ENCODE measurements at regions of chr16 and their contacts with region 1.

Region 1: GRCh38 chr16:8572919-8573724 is 17.2 kb downstream of the TMEM114 start:
- DNase-seq: no peak
- ATAC-seq: peak; percentile 56
- H3K4me3 ChIP-seq: no peak overlapping the region
- H3K27ac ChIP-seq: no peak overlapping the region
- H3K4me1 ChIP-seq: no peaks in the 10 kb centered on the region
- H3K27me3 ChIP-seq: no peaks in the 10 kb centered on the region; a peak in 2 of 4 replicates
- CTCF ChIP-seq: peak; percentile 39 to 64 (median 54); a peak in 5 of 6 replicates
- EP300 ChIP-seq: no peak
- POLR2A ChIP-seq: no peak
- RAD21 ChIP-seq: peak; percentile 86

Region 2: GRCh38 chr16:7979448-7980132 is 593.5 kb before region 1 on chr16:
- CTCF ChIA-PET with region 1: no interaction called
- POLR2A ChIA-PET with region 1: no interaction called
- RAD21 ChIA-PET with region 1: no interaction called
- SMC1A ChIA-PET with region 1: no interaction called
- in situ Hi-C with region 1: no loop called
- intact Hi-C with region 1: no loop called
- DNase-seq: no peak
- ATAC-seq: no peak
- H3K4me3 ChIP-seq: no peak overlapping the region
- H3K27ac ChIP-seq: no peak overlapping the region
- H3K4me1 ChIP-seq: no peaks in the 10 kb centered on the region
- H3K27me3 ChIP-seq: no peaks in the 10 kb centered on the region
- CTCF ChIP-seq: no peak
- EP300 ChIP-seq: no peak
- POLR2A ChIP-seq: no peak
- RAD21 ChIP-seq: no peak

Region 3: GRCh38 chr16:8330761-8331160 is 242.4 kb before region 1 on chr16:
- CTCF ChIA-PET with region 1: no interaction called
- POLR2A ChIA-PET with region 1: no interaction called
- RAD21 ChIA-PET with region 1: no interaction called
- SMC1A ChIA-PET with region 1: no interaction called
- in situ Hi-C with region 1: no loop called
- intact Hi-C with region 1: no loop called
- DNase-seq: no peak
- ATAC-seq: no peak
- H3K4me3 ChIP-seq: no peak overlapping the region
- H3K27ac ChIP-seq: no peak overlapping the region
- H3K4me1 ChIP-seq: no peaks in the 10 kb centered on the region
- H3K27me3 ChIP-seq: no peaks in the 10 kb centered on the region
- CTCF ChIP-seq: no peak
- EP300 ChIP-seq: no peak
- POLR2A ChIP-seq: no peak
- RAD21 ChIP-seq: no peak

Region 4: DNA sequence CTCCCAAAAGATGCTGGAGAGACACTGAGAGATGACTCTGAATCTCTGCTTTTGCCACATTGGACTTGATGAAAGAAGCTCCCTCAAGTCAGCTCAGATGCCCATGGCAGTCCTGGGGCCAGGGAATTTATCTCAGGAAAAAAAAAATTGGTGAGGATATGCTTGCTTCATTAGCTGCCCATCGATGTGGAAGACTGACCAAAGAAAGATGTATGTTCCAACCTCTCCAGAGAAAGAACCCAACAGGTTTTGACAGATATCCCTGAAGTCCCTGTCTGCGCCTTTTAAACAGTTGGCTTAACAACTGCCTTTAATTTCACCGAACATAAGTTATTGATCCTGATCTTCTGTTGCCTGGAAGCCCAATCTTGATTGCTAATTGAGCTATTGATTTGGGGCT is 120.2 kb before region 1 on chr16:
- CTCF ChIA-PET with region 1: no interaction called
- POLR2A ChIA-PET with region 1: no interaction called
- RAD21 ChIA-PET with region 1: no interaction called
- SMC1A ChIA-PET with region 1: no interaction called
- in situ Hi-C with region 1: no loop called
- intact Hi-C with region 1: no loop called
- DNase-seq: no peak
- ATAC-seq: no peak
- H3K4me3 ChIP-seq: no peak overlapping the region
- H3K27ac ChIP-seq: no peak overlapping the region
- H3K4me1 ChIP-seq: no peaks in the 10 kb centered on the region
- H3K27me3 ChIP-seq: no peaks in the 10 kb centered on the region
- CTCF ChIP-seq: no peak
- EP300 ChIP-seq: no peak
- POLR2A ChIP-seq: no peak
- RAD21 ChIP-seq: no peak

Region 5: GRCh38 chr16:8595783-8596182 is 22.7 kb after region 1 on chr16:
- CTCF ChIA-PET with region 1: no interaction called
- POLR2A ChIA-PET with region 1: no interaction called
- RAD21 ChIA-PET with region 1: no interaction called
- SMC1A ChIA-PET with region 1: no interaction called
- in situ Hi-C with region 1: no loop called
- intact Hi-C with region 1: no loop called
- DNase-seq: no peak
- ATAC-seq: no peak
- H3K4me3 ChIP-seq: no peak overlapping the region
- H3K27ac ChIP-seq: no peak overlapping the region
- H3K4me1 ChIP-seq: no peaks in the 10 kb centered on the region
- H3K27me3 ChIP-seq: no peaks in the 10 kb centered on the region
- CTCF ChIP-seq: no peak
- EP300 ChIP-seq: no peak
- POLR2A ChIP-seq: no peak
- RAD21 ChIP-seq: no peak

Region 6: DNA sequence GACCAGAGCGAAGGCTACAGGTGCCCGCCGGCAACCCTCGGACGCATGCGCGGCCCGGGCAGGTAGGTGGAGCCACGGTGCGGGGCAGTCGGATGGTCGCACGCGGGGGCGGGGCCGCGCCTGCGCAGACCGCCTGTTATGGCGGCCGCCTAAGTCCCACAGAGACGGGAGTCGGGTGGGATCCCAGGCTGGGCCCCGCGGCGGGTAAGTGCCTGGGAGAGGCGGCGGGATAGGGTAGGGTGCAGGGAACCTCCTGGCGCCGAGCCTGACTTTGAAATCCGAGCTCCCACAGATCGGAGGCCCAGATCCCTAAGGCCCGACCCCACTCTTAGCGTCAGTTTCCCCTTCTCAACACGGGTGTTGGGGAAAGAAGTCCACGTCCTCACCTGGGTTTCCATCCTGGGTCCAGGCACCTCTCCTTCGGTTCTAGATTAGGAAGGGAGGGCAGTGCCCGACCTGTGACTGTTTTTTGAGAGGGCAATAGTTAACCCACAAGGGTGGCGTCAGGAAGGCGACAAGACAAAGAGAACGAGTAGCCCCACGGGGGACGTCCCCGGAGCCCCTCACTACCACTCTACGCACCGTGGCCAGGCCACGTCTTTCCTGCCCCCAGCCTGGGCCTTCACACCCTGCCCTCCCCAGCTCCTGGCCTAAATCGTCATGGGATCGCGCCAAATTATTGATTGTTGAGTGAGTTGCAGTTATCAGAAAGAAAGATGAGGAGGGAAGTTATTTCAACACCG is 48.6 kb after region 1 on chr16 and contains the start of gene METTL22:
- CTCF ChIA-PET with region 1: interaction called, 4 read pairs
- POLR2A ChIA-PET with region 1: no interaction called
- RAD21 ChIA-PET with region 1: no interaction called
- SMC1A ChIA-PET with region 1: interaction called, 4 read pairs
- in situ Hi-C with region 1: no loop called
- intact Hi-C with region 1: loop called (anchors 5 kb)
- DNase-seq: peak; percentile 56
- ATAC-seq: peak; percentile 98
- H3K4me3 ChIP-seq: peak within 1 kb of the TSS; percentile 99
- H3K27ac ChIP-seq: peak within 1 kb of the TSS; percentile 64
- H3K4me1 ChIP-seq: no peaks in the 10 kb centered on the region
- H3K27me3 ChIP-seq: peaks cover 0 to 1% of the 10 kb centered on the region in 2 experiments; a peak in 1 of 4 replicates
- CTCF ChIP-seq: no peak
- EP300 ChIP-seq: no peak
- POLR2A ChIP-seq: peak; percentile 91
- RAD21 ChIP-seq: no peak
- polyA plus RNA-seq, gene METTL22: 6.4 to 9.2 TPM

Region 7: GRCh38 chr16:8634991-8635736 is 62.0 kb after region 1 on chr16:
- CTCF ChIA-PET with region 1: interaction called, 11 read pairs
- POLR2A ChIA-PET with region 1: no interaction called
- RAD21 ChIA-PET with region 1: no interaction called
- SMC1A ChIA-PET with region 1: interaction called, 3 read pairs
- in situ Hi-C with region 1: no loop called
- intact Hi-C with region 1: no loop called
- DNase-seq: no peak
- ATAC-seq: 0 out of 3 replicates have a peak, but pooled peaks have one; percentile 24
- H3K4me3 ChIP-seq: no peak overlapping the region
- H3K27ac ChIP-seq: no peak overlapping the region
- H3K4me1 ChIP-seq: no peaks in the 10 kb centered on the region
- H3K27me3 ChIP-seq: no peaks in the 10 kb centered on the region
- CTCF ChIP-seq: peak in 2 of 3 experiments; percentile 22 to 49; a peak in 4 of 6 replicates
- EP300 ChIP-seq: no peak
- POLR2A ChIP-seq: no peak
- RAD21 ChIP-seq: peak; percentile 36